HEK293 (cell line): ENCODE measurements at regions of chr1 and their contacts with region 1.

Region 1: DNA sequence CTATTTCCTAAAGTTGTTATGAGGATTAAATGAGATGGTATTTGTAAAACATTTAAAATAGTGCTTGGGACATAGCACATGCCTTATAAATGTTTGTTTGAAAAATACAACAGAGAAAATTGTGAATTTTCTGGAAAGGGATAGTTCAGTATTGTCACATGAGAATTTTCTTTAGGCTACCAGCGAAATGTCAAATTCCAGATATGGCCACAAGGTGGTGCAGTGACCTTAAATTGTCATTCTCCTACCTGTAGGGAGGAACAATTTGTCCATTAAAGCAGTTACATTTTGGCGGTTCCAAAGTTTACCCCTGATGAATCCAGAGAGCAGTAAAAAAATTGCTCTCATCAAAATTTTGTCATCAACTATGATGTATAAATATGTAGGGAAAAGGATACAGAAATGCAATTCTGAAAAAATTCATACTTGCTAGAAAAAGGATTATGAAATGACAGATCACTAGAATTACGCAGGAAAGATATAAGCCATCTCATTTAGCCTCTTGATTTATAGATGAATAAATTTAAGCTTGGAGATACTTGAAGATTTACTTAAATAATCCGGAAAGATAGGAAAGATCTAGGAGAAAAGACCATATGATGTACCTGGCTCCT is 50.2 kb upstream of the TSHB start:
- H3K4me3 ChIP-seq: no peak overlapping the region
- H3K27ac ChIP-seq: no peak overlapping the region
- H3K4me1 ChIP-seq: no peaks in the 10 kb centered on the region
- CTCF ChIP-seq: peak; percentile 50; the same call in 1 of the 2 replicates

Region 2: DNA sequence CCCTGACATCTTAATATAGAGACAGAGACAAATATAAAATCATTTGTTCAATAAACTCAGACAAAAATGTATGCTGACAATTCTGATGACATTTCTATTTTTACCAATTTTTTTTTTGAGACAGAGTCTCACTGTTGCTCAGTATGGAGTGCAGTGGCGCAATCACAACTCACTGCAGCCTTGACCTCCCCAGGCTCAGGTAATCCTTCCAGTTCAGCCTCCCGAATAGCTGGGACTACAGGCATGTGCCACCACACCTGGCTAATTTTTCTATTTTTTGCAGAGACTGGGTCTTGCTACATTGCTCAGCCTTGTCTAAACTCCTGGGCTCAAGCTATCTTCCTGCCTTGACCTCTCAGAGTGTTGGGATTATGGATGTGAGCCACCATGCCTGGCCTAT is 185.3 kb before region 1 on chr1:
- CTCF ChIA-PET with region 1: no interaction called
- POLR2A ChIA-PET with region 1: no interaction called
- H3K4me3 ChIP-seq: no peak overlapping the region
- H3K27ac ChIP-seq: no peak overlapping the region
- H3K4me1 ChIP-seq: no peaks in the 10 kb centered on the region
- CTCF ChIP-seq: no peak

Region 3: DNA sequence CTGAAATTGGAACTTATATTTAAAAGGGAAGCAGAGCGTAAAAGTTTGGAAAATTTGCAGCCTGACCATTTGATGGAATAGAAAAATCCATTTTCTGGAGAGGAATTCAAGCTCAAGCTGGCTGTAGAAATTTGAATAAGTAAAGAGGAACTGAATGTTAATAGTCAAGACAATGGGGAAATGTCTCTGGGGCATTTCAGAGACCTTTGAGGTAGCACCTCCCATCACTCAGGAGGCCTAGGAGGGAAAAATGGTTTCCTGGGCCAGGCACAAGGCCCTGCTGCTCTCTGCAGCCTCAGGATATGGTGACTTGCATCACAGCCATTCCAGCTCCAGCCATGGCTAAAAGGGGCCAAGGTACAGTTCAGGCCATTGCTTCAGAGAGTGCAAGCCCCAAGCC is 32.6 kb after region 1 on chr1:
- CTCF ChIA-PET with region 1: no interaction called
- POLR2A ChIA-PET with region 1: no interaction called
- H3K4me3 ChIP-seq: no peak overlapping the region
- H3K27ac ChIP-seq: no peak overlapping the region
- H3K4me1 ChIP-seq: no peaks in the 10 kb centered on the region
- CTCF ChIP-seq: no peak

Region 4: GRCh38 chr1:115041654-115042053 is 62.3 kb after region 1 on chr1:
- CTCF ChIA-PET with region 1: interaction called, 14 read pairs
- POLR2A ChIA-PET with region 1: no interaction called
- H3K4me3 ChIP-seq: no peak overlapping the region
- H3K27ac ChIP-seq: no peak overlapping the region
- H3K4me1 ChIP-seq: no peaks in the 10 kb centered on the region
- CTCF ChIP-seq: no peak